ENCODE measurements at regions of chr5 and their contacts with region 1.

Region 1: DNA sequence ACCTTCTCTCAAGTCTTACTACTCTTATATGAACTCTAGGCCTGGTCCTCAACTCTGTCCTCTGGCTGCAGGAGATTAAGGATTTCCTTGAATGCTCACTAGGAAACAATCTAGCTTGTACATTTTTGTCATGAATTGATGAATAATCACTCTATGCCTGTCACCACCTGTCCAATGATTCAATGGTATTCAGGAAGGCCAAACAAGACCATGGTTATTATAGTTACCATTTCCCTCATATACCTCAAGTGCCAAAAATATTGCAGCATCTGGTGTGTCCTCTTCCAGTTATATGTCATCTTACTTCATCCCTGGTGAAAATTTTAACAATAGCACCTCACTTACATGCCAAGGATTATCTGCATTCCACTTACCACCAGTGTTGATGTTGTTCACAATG is 179.0 kb upstream of the MOCS2 start:
- DNase-seq: no peak
- ATAC-seq: no peak
- H3K4me3 ChIP-seq: no peak overlapping the region
- H3K4me3 Mint-ChIP-seq: no peak overlapping the region
- H3K27ac ChIP-seq: no peak overlapping the region
- H3K27ac Mint-ChIP-seq: no peak overlapping the region
- H3K4me1 ChIP-seq: no peaks in the 10 kb centered on the region
- H3K4me1 Mint-ChIP-seq: no peaks in the 10 kb centered on the region
- H3K27me3 ChIP-seq: no peaks in the 10 kb centered on the region
- H3K27me3 Mint-ChIP-seq: peaks cover 2 to 15% (median 6%) of the 10 kb centered on the region in 5 donors

Region 2: DNA sequence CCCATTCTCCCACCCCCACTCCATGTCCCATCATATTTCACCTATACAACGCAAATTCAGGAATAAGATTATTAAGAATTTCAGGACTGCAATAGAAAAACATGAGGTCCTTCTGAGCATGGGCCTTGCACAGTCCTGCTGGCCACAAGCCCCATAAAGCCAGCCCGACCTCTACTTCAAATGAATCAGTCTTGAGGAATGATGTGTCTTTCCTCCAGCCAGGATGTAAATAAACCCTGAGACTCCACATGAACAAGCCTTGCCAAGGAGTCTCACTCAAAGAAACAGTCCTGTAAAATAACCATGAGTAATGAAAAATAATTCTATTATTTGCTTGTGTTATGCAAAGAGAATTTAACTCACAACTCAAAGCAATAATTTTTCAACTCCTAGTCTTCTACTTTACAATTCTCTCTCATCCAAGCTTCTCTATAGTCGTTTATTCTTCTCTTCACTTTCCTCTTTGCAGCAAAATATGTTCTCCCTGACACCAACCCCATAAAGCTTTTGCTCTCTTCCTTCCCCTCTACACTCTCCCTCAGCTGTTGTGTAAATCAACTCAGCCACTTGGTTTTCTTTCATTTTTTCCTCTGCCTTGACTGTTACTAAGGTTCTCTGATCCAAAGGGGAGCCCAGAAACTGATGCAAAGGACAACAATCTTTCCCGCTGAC is 38.8 kb before region 1 on chr5:
- CTCF ChIA-PET with region 1: no interaction called
- POLR2A ChIA-PET with region 1: no interaction called
- intact Hi-C with region 1: loop called in 1 of 2 experiments (anchors 1 kb)
- DNase-seq: no peak
- ATAC-seq: no peak
- H3K4me3 ChIP-seq: no peak overlapping the region
- H3K4me3 Mint-ChIP-seq: no peak overlapping the region
- H3K27ac ChIP-seq: no peak overlapping the region
- H3K27ac Mint-ChIP-seq: no peak overlapping the region
- H3K4me1 ChIP-seq: no peaks in the 10 kb centered on the region
- H3K4me1 Mint-ChIP-seq: peaks cover 0 to 11% (median 0%) of the 10 kb centered on the region in 7 donors
- H3K27me3 ChIP-seq: no peaks in the 10 kb centered on the region
- H3K27me3 Mint-ChIP-seq: peaks cover 0 to 17% (median 4%) of the 10 kb centered on the region in 5 donors